Natural killer cell (primary cell): ENCODE measurements at regions of chr1 and their contacts with region 1.

Region 1: GRCh38 chr1:246497331-246497915 is 9.7 kb downstream of the SMYD3 start:
- DNase-seq: peak in 1 of 2 donors; percentile 87
- ATAC-seq: peak; percentile 78 to 93 (median 79)
- H3K4me3 ChIP-seq: no peak overlapping the region
- H3K4me3 Mint-ChIP-seq: no peak overlapping the region
- H3K27ac ChIP-seq: no peak overlapping the region
- H3K27ac Mint-ChIP-seq: peak overlapping the region; percentile 69 to 78
- H3K4me1 ChIP-seq: no peaks in the 10 kb centered on the region
- H3K4me1 Mint-ChIP-seq: peaks cover 14% of the 10 kb centered on the region in 2 donors
- H3K27me3 ChIP-seq: no peaks in the 10 kb centered on the region
- H3K27me3 Mint-ChIP-seq: no peaks in the 10 kb centered on the region
- CTCF ChIP-seq: peak; percentile 82

Region 2: GRCh38 chr1:246602194-246602593 is 104.8 kb after region 1 on chr1:
- intact Hi-C with region 1: loop called (anchors 2 kb)
- DNase-seq: peak in 1 of 2 donors; percentile 27
- ATAC-seq: peak; percentile 72 to 84 (median 74)
- H3K4me3 ChIP-seq: no peak overlapping the region
- H3K4me3 Mint-ChIP-seq: peak overlapping the region; percentile 8
- H3K27ac ChIP-seq: no peak overlapping the region
- H3K27ac Mint-ChIP-seq: peak overlapping the region in 1 of 2 donors; percentile 50
- H3K4me1 ChIP-seq: peaks cover 12% of the 10 kb centered on the region
- H3K4me1 Mint-ChIP-seq: peaks cover 47 to 48% of the 10 kb centered on the region in 2 donors
- H3K27me3 ChIP-seq: no peaks in the 10 kb centered on the region
- H3K27me3 Mint-ChIP-seq: no peaks in the 10 kb centered on the region
- CTCF ChIP-seq: no peak

Region 3: DNA sequence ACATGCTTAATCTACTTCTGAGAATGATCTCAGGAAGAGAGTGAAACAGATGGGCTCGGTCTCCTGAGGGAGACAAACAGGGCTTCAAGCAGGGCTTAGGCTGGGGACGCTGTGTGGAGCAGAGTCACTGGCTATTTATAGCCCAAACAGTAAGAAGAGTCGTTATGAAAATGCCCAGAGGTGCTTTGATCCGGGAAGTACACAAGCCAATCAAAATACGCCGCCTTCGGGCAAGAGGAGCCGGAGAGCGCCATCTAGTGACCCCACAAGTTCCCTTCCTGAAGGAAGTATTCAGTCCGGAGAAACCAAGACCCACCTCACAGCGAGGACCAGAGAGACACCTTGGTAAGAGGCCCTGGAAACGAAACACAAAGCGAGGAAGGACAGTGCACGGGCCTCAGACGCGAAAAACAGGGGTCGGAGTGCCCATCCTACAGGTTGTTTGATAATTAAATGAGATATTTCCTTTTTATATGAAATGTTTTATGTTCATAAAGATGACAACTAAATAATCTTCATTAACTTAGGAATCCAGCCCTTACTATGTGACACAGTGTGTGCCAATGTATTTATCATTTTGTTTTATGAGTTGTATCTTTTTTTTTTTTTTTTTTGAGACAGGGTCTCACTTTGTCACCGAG is 201.8 kb after region 1 on chr1:
- intact Hi-C with region 1: loop called (anchors 1 kb)
- DNase-seq: peak; percentile 63 to 91
- ATAC-seq: peak; percentile 96 to 98 (median 96)
- H3K4me3 ChIP-seq: no peak overlapping the region
- H3K4me3 Mint-ChIP-seq: peak overlapping the region; percentile 82
- H3K27ac ChIP-seq: no peak overlapping the region
- H3K27ac Mint-ChIP-seq: peak overlapping the region; percentile 1 to 52
- H3K4me1 ChIP-seq: peaks cover 10% of the 10 kb centered on the region
- H3K4me1 Mint-ChIP-seq: peaks cover 11 to 12% of the 10 kb centered on the region in 2 donors
- H3K27me3 ChIP-seq: no peaks in the 10 kb centered on the region
- H3K27me3 Mint-ChIP-seq: peaks cover 0 to 2% of the 10 kb centered on the region in 2 donors
- CTCF ChIP-seq: peak; percentile 77

Region 4: GRCh38 chr1:246753670-246754535 is 256.5 kb after region 1 on chr1:
- intact Hi-C with region 1: loop called (anchors 1 kb)
- DNase-seq: peak; percentile 43 to 76
- ATAC-seq: peak; percentile 79 to 96 (median 95)
- H3K4me3 ChIP-seq: no peak overlapping the region
- H3K4me3 Mint-ChIP-seq: no peak overlapping the region
- H3K27ac ChIP-seq: no peak overlapping the region
- H3K27ac Mint-ChIP-seq: no peak overlapping the region
- H3K4me1 ChIP-seq: no peaks in the 10 kb centered on the region
- H3K4me1 Mint-ChIP-seq: no peaks in the 10 kb centered on the region
- H3K27me3 ChIP-seq: no peaks in the 10 kb centered on the region
- H3K27me3 Mint-ChIP-seq: no peaks in the 10 kb centered on the region
- CTCF ChIP-seq: peak; percentile 69